HCT116 (cell line): ENCODE measurements at regions of chr17 and their contacts with region 1.

Region 1: DNA sequence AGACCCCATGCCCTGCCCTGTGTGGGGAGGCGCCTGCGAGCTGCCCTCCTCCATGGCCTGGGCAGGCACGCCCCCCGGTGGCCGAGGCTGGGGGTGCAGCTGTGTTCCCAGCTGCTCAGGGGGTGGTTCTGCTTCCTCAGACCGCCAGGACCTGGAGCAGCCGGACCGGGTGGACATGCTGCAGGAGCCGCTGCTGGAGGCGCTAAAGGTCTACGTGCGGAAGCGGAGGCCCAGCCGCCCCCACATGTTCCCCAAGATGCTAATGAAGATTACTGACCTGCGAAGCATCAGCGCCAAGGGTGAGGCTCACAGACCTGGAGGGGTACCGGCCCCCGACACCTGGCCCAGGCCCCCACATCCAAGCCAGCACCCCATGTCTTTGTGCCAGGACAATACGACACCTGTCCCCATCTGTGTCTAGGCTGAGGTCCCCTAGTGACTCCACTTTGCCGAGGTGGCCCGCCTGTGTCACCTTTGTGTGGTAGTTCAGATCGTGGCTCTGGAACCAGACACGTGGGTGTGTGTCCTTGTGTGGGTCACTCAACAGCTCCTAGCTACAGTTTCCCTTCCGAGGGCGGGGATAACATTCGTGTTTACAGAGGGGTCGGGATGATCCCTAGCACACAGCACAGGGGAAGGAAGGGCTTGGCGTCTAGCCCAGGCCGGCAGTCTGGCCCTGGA is 9.3 kb downstream of the GJD3 start:
- DNase-seq: no peak
- ATAC-seq: peak; percentile 81
- H3K4me3 ChIP-seq: no peak overlapping the region
- H3K27ac ChIP-seq: no peak overlapping the region
- H3K4me1 ChIP-seq: peaks cover 0 to 8% of the 10 kb centered on the region in 2 experiments; a peak in 2 of 4 replicates
- H3K27me3 ChIP-seq: no peaks in the 10 kb centered on the region
- CTCF ChIP-seq: peak; percentile 93 to 95 (median 95)
- POLR2A ChIP-seq: no peak
- RAD21 ChIP-seq: peak; percentile 98

Region 2: GRCh38 chr17:40303009-40303657 is 52.1 kb before region 1 on chr17:
- CTCF ChIA-PET with region 1: interaction called, 107 read pairs
- POLR2A ChIA-PET with region 1: no interaction called
- RAD21 ChIA-PET with region 1: interaction called, 4 to 11 read pairs
- intact Hi-C with region 1: loop called (anchors 1 kb)
- DNase-seq: peak; percentile 35
- ATAC-seq: peak; percentile 63
- H3K4me3 ChIP-seq: no peak overlapping the region
- H3K27ac ChIP-seq: no peak overlapping the region
- H3K4me1 ChIP-seq: peaks cover 10 to 21% of the 10 kb centered on the region in 2 experiments; a peak in 3 of 4 replicates
- H3K27me3 ChIP-seq: no peaks in the 10 kb centered on the region
- CTCF ChIP-seq: peak; percentile 62 to 89 (median 70)
- POLR2A ChIP-seq: no peak
- RAD21 ChIP-seq: peak; percentile 92

Region 3: GRCh38 chr17:40317880-40318829 is 37.1 kb before region 1 on chr17:
- CTCF ChIA-PET with region 1: interaction called, 14 read pairs
- POLR2A ChIA-PET with region 1: interaction called, 3 read pairs
- RAD21 ChIA-PET with region 1: no interaction called
- intact Hi-C with region 1: no loop called
- DNase-seq: peak; percentile 88
- ATAC-seq: peak; percentile 81
- H3K4me3 ChIP-seq: peak overlapping the region; percentile 94 to 95
- H3K27ac ChIP-seq: peak overlapping the region; percentile 91
- H3K4me1 ChIP-seq: peaks cover 68 to 90% of the 10 kb centered on the region in 2 experiments
- H3K27me3 ChIP-seq: no peaks in the 10 kb centered on the region
- CTCF ChIP-seq: no peak
- POLR2A ChIP-seq: no peak
- RAD21 ChIP-seq: no peak

Region 4: GRCh38 chr17:40404003-40404402 is 48.7 kb after region 1 on chr17:
- CTCF ChIA-PET with region 1: no interaction called
- POLR2A ChIA-PET with region 1: no interaction called
- RAD21 ChIA-PET with region 1: no interaction called
- intact Hi-C with region 1: no loop called
- DNase-seq: no peak
- ATAC-seq: no peak
- H3K4me3 ChIP-seq: no peak overlapping the region
- H3K27ac ChIP-seq: no peak overlapping the region
- H3K4me1 ChIP-seq: no peaks in the 10 kb centered on the region
- H3K27me3 ChIP-seq: no peaks in the 10 kb centered on the region
- CTCF ChIP-seq: no peak
- POLR2A ChIP-seq: no peak
- RAD21 ChIP-seq: no peak